MCF 10A (cell line): ENCODE measurements at regions of chr9 and their contacts with region 1.

Region 1: GRCh38 chr9:68999393-69000105 is 14.4 kb downstream of the PRKACG start:
- DNase-seq: peak; percentile 77
- H3K4me3 Mint-ChIP-seq: no peak overlapping the region
- H3K27ac Mint-ChIP-seq: peak overlapping the region; percentile 84
- H3K4me1 Mint-ChIP-seq: peaks cover 1% of the 10 kb centered on the region
- H3K27me3 Mint-ChIP-seq: peaks cover 80% of the 10 kb centered on the region
- CTCF ChIP-seq: peak; percentile 61

Region 2: DNA sequence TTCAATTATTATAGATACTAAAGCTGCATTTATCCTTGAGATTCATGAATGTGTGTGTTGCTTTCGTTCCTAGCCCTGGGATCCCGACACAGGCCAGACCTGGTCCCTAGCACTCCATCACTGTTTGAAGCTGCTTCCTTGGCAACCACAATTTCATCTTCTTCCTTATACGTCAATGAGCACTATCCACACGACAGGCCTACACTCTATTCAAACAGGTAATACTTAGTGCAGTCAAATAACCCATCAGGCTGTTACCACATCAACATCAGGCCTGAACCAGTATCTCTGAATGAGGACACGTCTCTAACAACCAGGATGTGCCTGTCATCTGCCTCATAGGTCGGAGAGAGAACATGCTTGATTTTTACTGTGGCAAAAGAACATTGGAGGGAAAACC is 59.0 kb before region 1 on chr9:
- CTCF ChIA-PET with region 1: no interaction called
- POLR2A ChIA-PET with region 1: no interaction called
- intact Hi-C with region 1: no loop called
- DNase-seq: no peak
- H3K4me3 Mint-ChIP-seq: no peak overlapping the region
- H3K27ac Mint-ChIP-seq: no peak overlapping the region
- H3K4me1 Mint-ChIP-seq: no peaks in the 10 kb centered on the region
- H3K27me3 Mint-ChIP-seq: peaks cover 38% of the 10 kb centered on the region
- CTCF ChIP-seq: no peak

Region 3: DNA sequence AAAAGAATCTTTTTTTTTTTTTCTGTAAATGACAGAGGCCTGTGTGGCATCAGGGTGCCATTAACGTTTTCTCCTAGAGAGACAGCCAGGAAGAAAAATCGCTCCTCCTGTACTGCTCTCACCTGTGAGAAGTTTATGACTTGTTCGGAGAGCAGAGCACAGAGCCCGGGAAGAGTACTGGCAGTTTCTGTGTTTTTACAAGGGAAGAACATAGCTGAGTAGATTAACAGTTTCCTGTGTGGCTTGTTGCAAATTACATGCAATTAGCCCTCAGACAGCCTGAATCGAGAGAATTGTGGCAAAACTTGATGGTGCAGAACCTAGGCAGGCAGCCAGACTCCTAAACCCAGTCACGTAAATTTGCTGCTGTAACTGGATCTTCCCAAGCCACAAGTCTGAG is 17.8 kb before region 1 on chr9:
- CTCF ChIA-PET with region 1: interaction called, 11 read pairs
- POLR2A ChIA-PET with region 1: no interaction called
- intact Hi-C with region 1: no loop called
- DNase-seq: no peak
- H3K4me3 Mint-ChIP-seq: no peak overlapping the region
- H3K27ac Mint-ChIP-seq: no peak overlapping the region
- H3K4me1 Mint-ChIP-seq: no peaks in the 10 kb centered on the region
- H3K27me3 Mint-ChIP-seq: peaks cover 11% of the 10 kb centered on the region
- CTCF ChIP-seq: no peak

Region 4: DNA sequence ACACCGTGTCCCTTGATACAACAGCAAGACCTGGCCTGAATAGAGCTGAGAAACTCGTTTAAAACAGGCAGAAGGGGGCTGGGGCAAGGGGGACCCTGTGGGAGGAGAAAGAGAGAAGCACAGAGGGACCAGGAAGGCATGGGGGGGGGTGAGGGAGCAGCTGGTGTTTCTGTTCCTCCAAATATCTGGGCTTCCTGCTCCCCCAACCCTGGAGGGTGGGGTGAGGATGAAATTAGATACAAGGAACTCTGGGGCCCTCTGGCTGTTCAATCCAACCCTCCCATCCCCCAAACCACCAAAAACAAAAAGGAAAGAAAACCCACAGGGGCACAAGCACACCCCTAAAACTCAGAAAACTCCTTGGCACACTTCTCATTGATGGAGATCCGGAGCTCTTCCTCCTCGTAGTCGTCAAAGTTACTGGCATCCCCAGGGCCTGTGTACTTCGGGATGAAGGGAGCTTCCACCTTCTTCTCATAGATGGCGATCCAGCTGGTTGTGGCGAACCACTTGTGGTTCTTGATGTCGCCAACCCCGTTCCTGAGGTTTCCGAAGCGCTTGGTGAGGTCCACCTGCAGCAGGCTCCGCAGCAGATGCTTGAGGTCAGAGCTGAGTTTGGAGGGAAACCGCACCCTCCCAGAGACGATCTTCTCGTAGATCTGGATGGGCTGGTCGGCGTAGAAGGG is 13.3 kb after region 1 on chr9:
- CTCF ChIA-PET with region 1: interaction called, 14 read pairs
- POLR2A ChIA-PET with region 1: no interaction called
- intact Hi-C with region 1: no loop called
- DNase-seq: no peak
- H3K4me3 Mint-ChIP-seq: no peak overlapping the region
- H3K27ac Mint-ChIP-seq: peak overlapping the region; percentile 63
- H3K4me1 Mint-ChIP-seq: no peaks in the 10 kb centered on the region
- H3K27me3 Mint-ChIP-seq: peaks cover 43% of the 10 kb centered on the region
- CTCF ChIP-seq: no peak

Region 5: DNA sequence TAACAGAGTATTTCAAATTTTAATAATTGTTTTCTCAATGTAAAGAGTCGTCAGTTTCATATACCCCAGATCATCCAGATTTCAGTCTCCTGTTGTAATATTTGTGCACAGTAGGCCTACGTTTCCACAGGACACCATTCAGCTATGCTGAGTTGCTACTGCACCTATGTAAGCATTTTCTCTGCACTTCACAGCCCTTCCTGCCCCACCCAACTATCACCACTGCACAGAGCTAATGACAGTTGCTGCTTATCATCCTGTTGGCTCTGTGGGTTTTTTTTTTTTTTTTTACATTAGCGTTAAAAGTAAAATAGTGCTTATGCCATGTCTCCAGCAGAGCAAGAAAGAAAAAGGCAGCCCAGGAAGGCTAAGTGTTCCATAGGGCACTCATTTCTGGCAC is 20.3 kb after region 1 on chr9:
- CTCF ChIA-PET with region 1: interaction called, 14 read pairs
- POLR2A ChIA-PET with region 1: no interaction called
- intact Hi-C with region 1: no loop called
- DNase-seq: no peak
- H3K4me3 Mint-ChIP-seq: no peak overlapping the region
- H3K27ac Mint-ChIP-seq: no peak overlapping the region
- H3K4me1 Mint-ChIP-seq: peaks cover 6% of the 10 kb centered on the region
- H3K27me3 Mint-ChIP-seq: peaks cover 52% of the 10 kb centered on the region
- CTCF ChIP-seq: no peak